Activated T-helper 2 cell treated with anti-CD3 and anti-CD28 coated beads, Interferon-gamma antibody, Interleukin-2, Interleukin-4, amounts not matched to agents 10 μg/mL and 5 μg/mL and 100 μg/mL, durations not matched to agents 14 hours and 24 hours and 36 hours (primary cell): ENCODE measurements at regions of chr6 and their contacts with region 1.

Region 1: GRCh38 chr6:157823001-157823527 is at the start of gene SNX9:
- DNase-seq: peak; percentile 42
- H3K4me3 Mint-ChIP-seq: peak within 1 kb of the TSS; percentile 92
- H3K27ac Mint-ChIP-seq: peak within 1 kb of the TSS; percentile 96
- H3K4me1 Mint-ChIP-seq: peaks cover 30% of the 10 kb centered on the region
- H3K27me3 Mint-ChIP-seq: peaks cover 35% of the 10 kb centered on the region
- total RNA-seq, gene SNX9: 55.3 and 55.6 TPM in 2 replicates

Region 2: GRCh38 chr6:157800420-157801237 is 22.4 kb before region 1 on chr6:
- intact Hi-C with region 1: loop called (anchors 1 kb)
- DNase-seq: no peak
- H3K4me3 Mint-ChIP-seq: no peak overlapping the region
- H3K27ac Mint-ChIP-seq: peak overlapping the region; percentile 21
- H3K4me1 Mint-ChIP-seq: peaks cover 42% of the 10 kb centered on the region
- H3K27me3 Mint-ChIP-seq: peaks cover 54% of the 10 kb centered on the region

Region 3: GRCh38 chr6:157885211-157885788 is 62.2 kb after region 1 on chr6:
- intact Hi-C with region 1: loop called (anchors 2 kb)
- DNase-seq: peak; percentile 37
- H3K4me3 Mint-ChIP-seq: no peak overlapping the region
- H3K27ac Mint-ChIP-seq: peak overlapping the region; percentile 86
- H3K4me1 Mint-ChIP-seq: peaks cover 55% of the 10 kb centered on the region
- H3K27me3 Mint-ChIP-seq: peaks cover 11% of the 10 kb centered on the region

Region 4: DNA sequence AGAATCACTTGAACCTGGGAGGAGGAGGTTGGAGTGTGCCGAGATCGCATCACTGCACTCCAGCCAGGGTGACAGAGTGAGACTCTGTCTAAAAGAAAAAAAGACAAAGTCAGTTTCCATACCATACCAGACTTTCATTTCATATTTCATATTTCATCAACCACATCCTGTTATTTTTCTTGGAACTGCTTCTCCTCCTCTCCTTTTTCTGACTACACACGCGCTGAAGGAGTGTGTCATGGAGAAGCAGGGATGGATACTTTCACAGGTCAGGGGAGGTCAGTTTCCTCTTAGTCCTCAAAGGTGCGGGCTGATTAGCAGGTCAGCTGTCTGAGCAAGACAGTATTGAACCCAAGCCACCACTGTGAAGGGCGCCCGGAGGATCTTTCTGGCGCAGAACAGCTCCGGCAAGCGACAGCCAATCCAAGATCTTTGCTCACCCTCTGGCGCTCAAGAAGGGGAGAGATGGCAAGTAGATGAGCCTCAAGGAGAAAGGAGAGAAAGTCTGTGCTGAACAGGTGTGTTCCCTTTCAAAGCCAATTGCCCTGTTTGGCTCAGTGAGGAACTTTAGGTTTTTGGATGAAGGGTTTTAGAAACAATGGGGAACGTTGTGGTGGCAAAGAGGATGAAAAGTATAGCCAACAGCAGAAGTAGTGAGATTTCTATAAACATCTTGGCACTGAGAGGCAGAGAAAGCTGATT is 139.7 kb after region 1 on chr6:
- intact Hi-C with region 1: loop called (anchors 5 kb)
- DNase-seq: peak; percentile 27
- H3K4me3 Mint-ChIP-seq: peak overlapping the region; percentile 76
- H3K27ac Mint-ChIP-seq: peak overlapping the region; percentile 86
- H3K4me1 Mint-ChIP-seq: peaks cover 24% of the 10 kb centered on the region
- H3K27me3 Mint-ChIP-seq: no peaks in the 10 kb centered on the region

Region 5: GRCh38 chr6:158026054-158026900 is 203.2 kb after region 1 on chr6:
- intact Hi-C with region 1: loop called (anchors 1 kb)
- DNase-seq: peak; percentile 71
- H3K4me3 Mint-ChIP-seq: peak overlapping the region; percentile 74
- H3K27ac Mint-ChIP-seq: peak overlapping the region; percentile 99
- H3K4me1 Mint-ChIP-seq: peaks cover 28% of the 10 kb centered on the region
- H3K27me3 Mint-ChIP-seq: no peaks in the 10 kb centered on the region

Region 6: GRCh38 chr6:158284007-158284875 is 461.2 kb after region 1 on chr6:
- intact Hi-C with region 1: no loop called
- DNase-seq: no peak
- H3K4me3 Mint-ChIP-seq: no peak overlapping the region
- H3K27ac Mint-ChIP-seq: no peak overlapping the region
- H3K4me1 Mint-ChIP-seq: peaks cover 28% of the 10 kb centered on the region
- H3K27me3 Mint-ChIP-seq: no peaks in the 10 kb centered on the region